Natural killer cell (primary cell): ENCODE measurements at regions of chr6 and their contacts with region 1.

Region 1: DNA sequence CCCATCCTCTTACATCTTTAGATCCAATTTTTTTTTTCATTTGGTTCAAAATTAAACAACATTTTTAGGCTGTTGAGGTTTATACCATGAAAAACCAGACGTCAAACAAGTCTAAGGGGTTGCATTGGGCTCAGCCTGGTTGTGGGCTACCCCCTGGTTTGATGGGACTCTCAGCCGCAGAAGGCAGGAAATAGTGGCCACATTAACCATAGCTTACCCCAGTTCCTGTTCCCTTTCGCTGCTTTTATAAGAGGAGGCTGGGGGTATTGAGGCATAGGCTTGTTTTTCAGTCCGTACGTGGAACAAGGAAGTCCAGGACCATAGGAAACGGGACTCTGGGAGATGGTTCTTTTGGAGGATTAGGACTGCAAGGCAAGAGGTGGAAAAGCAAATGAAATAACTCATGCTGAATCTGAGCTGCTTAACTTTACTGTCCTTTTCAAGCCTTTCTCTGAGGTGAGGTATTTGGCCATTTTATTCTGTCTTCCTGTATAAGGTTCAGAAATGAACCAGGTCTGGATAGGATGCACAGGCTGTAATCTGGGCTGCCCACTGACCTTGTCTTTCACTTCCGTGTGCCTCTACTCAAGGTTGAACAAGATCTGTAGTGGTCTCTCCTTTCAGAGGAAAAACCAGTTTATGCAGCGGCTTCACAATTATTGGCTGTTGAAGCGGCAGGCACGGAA is 7.7 kb downstream of the BRPF3 start:
- DNase-seq: peak; percentile 57 to 84
- ATAC-seq: peak; percentile 85 to 99 (median 92)
- H3K4me3 ChIP-seq: peak overlapping the region; percentile 2
- H3K4me3 Mint-ChIP-seq: peak overlapping the region; percentile 86
- H3K27ac ChIP-seq: no peak overlapping the region
- H3K27ac Mint-ChIP-seq: peak overlapping the region; percentile 84
- H3K4me1 ChIP-seq: peaks cover 48% of the 10 kb centered on the region
- H3K4me1 Mint-ChIP-seq: peaks cover 55 to 63% of the 10 kb centered on the region in 2 donors
- H3K27me3 ChIP-seq: no peaks in the 10 kb centered on the region
- H3K27me3 Mint-ChIP-seq: no peaks in the 10 kb centered on the region
- CTCF ChIP-seq: no peak

Region 2: DNA sequence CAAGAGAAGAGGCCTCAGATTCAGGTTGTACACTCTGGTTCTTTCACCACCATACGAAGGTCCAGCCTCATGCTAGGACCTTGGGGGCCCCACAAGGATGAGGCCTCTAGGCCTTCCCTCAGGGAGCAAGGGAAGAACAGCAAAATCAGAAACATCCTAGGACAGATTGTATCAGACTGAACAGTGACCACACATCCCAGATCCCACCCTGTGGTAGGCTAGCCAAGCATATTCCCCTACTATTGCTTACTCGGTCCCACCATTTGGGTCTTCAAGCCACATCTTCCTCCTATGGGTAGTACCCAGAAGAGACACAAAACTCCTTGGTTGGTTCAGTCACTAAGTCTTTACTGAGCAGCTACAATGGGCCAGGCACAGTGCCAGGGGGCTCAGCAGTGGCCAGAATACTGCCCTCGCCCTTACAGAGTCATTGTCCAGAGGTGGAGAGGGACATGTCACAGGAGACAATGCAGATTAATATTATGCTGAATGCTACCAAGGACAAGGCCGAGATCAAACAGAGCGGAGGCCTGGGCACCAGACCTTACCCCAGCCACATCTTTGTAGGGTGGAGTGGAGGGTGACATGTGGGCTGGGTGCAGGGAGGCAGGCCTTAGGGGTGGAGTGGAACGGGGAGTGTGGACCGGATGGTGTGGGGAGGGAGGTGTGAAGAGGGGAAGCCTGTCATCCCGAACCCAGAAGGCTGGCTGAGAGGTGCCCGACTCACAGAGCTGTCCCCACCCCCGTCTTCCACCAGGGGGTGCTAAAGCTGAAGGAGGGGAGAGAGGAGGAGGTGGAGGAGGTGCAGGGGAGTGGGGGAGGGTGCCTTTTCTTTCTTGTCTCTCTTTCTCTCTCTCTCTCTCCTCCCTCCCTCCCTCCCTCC is 80.7 kb before region 1 on chr6:
- intact Hi-C with region 1: loop called (anchors 2 kb)
- DNase-seq: peak; percentile 87 to 96
- ATAC-seq: peak; percentile 72 to 88 (median 87)
- H3K4me3 ChIP-seq: no peak overlapping the region
- H3K4me3 Mint-ChIP-seq: peak overlapping the region; percentile 64
- H3K27ac ChIP-seq: peak overlapping the region; percentile 69
- H3K27ac Mint-ChIP-seq: peak overlapping the region; percentile 100
- H3K4me1 ChIP-seq: peaks cover 88% of the 10 kb centered on the region
- H3K4me1 Mint-ChIP-seq: peaks cover 68 to 96% of the 10 kb centered on the region in 2 donors
- H3K27me3 ChIP-seq: no peaks in the 10 kb centered on the region
- H3K27me3 Mint-ChIP-seq: no peaks in the 10 kb centered on the region
- CTCF ChIP-seq: peak; percentile 64